Activated naive CD4-positive, alpha-beta T cell treated with anti-CD3 and anti-CD28 coated beads, Interleukin-2, amount 10 ng/mL, durations not matched to agents 7 days and 5 days (primary cell): ENCODE measurements at regions of chr12 and their contacts with region 1.

Region 1: GRCh38 chr12:82685790-82686167 is 927 bp upstream of the TMTC2 start:
- DNase-seq: peak; percentile 94
- H3K4me3 Mint-ChIP-seq: peak overlapping the region; percentile 91
- H3K27ac Mint-ChIP-seq: peak overlapping the region; percentile 90
- H3K4me1 Mint-ChIP-seq: peaks cover 21% of the 10 kb centered on the region
- H3K27me3 Mint-ChIP-seq: peaks cover 8% of the 10 kb centered on the region

Region 2: DNA sequence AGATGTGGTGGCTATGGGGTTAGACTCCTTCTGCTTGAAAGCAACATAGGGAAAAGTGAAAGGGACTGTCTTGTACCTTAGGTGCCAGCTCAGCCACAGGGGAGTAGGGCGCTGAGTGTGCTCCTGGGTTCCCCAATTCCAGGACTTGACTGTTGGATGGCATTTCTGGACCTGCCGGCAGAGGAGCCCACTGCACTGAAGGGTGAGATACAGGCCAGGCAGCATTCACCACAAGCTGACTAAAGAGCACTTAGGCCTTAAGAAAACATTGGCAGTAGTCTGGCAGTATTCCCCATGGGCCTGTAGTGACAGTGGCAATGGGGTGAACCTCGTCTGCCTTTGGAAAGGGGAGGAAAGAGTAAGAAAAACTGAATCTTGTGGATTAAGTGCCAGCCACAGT is 66.1 kb before region 1 on chr12:
- CTCF ChIA-PET with region 1: no interaction called
- DNase-seq: no peak
- H3K4me3 Mint-ChIP-seq: no peak overlapping the region
- H3K27ac Mint-ChIP-seq: no peak overlapping the region
- H3K4me1 Mint-ChIP-seq: no peaks in the 10 kb centered on the region
- H3K27me3 Mint-ChIP-seq: no peaks in the 10 kb centered on the region

Region 3: GRCh38 chr12:83823431-83823963 is 1137.7 kb after region 1 on chr12:
- CTCF ChIA-PET with region 1: interaction called, 22 read pairs
- DNase-seq: peak; percentile 34
- H3K4me3 Mint-ChIP-seq: no peak overlapping the region
- H3K27ac Mint-ChIP-seq: no peak overlapping the region
- H3K4me1 Mint-ChIP-seq: no peaks in the 10 kb centered on the region
- H3K27me3 Mint-ChIP-seq: no peaks in the 10 kb centered on the region

Region 4: GRCh38 chr12:84502907-84503787 is 1817.4 kb after region 1 on chr12:
- CTCF ChIA-PET with region 1: interaction called, 15 read pairs
- DNase-seq: peak; percentile 30
- H3K4me3 Mint-ChIP-seq: no peak overlapping the region
- H3K27ac Mint-ChIP-seq: no peak overlapping the region
- H3K4me1 Mint-ChIP-seq: no peaks in the 10 kb centered on the region
- H3K27me3 Mint-ChIP-seq: no peaks in the 10 kb centered on the region